Testis (tissue), 5 donors: ENCODE measurements at regions of chr4 and their contacts with region 1.

Region 1: GRCh38 chr4:88456757-88457306 is at the start of gene HERC5:
- DNase-seq: peak; percentile 95
- H3K4me3 ChIP-seq: peak within 1 kb of the TSS; percentile 80 to 97
- H3K27ac ChIP-seq: peak within 1 kb of the TSS; percentile 87 to 89
- H3K4me1 ChIP-seq: no peaks in the 10 kb centered on the region
- H3K27me3 ChIP-seq: no peaks in the 10 kb centered on the region
- CTCF ChIP-seq: peak; percentile 48 to 71 (median 69)
- POLR2A ChIP-seq: peak; percentile 22
- total RNA-seq, gene HERC5: 111 to 127 TPM

Region 2: DNA sequence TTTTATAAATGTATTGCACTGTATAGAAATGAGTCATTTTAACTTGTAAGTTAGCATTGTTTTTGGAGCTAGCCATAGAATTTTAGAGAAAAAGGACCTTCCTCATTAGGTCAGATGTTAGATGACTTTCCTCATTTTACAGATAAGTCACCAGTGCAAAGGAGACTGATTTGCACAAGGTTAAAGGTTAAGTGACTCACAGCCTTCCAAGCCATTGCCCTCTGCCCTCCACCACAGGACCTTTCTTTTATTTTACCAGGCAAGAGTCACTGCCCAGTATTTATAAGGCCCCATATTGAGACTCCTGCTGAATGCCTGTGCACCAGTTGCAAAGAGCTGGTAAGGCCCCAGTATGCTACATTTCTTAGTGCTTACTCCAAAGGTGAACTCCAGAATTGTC is 294.2 kb before region 1 on chr4:
- intact Hi-C with region 1: no loop called
- DNase-seq: no peak
- H3K4me3 ChIP-seq: no peak overlapping the region
- H3K27ac ChIP-seq: no peak overlapping the region
- H3K4me1 ChIP-seq: no peaks in the 10 kb centered on the region
- H3K27me3 ChIP-seq: no peaks in the 10 kb centered on the region
- CTCF ChIP-seq: no peak
- POLR2A ChIP-seq: no peak

Region 3: GRCh38 chr4:88284439-88285234 is 172.2 kb before region 1 on chr4 and contains the start of gene PPM1K:
- intact Hi-C with region 1: loop called (anchors 10 kb)
- DNase-seq: peak; percentile 100
- H3K4me3 ChIP-seq: peak within 1 kb of the TSS; percentile 74 to 88
- H3K27ac ChIP-seq: peak within 1 kb of the TSS; percentile 97 to 98
- H3K4me1 ChIP-seq: peaks cover 11% of the 10 kb centered on the region
- H3K27me3 ChIP-seq: no peaks in the 10 kb centered on the region
- CTCF ChIP-seq: peak in 1 of 3 experiments; percentile 18
- POLR2A ChIP-seq: peak; percentile 44
- total RNA-seq, gene PPM1K: 76.5 to 104 TPM

Region 4: DNA sequence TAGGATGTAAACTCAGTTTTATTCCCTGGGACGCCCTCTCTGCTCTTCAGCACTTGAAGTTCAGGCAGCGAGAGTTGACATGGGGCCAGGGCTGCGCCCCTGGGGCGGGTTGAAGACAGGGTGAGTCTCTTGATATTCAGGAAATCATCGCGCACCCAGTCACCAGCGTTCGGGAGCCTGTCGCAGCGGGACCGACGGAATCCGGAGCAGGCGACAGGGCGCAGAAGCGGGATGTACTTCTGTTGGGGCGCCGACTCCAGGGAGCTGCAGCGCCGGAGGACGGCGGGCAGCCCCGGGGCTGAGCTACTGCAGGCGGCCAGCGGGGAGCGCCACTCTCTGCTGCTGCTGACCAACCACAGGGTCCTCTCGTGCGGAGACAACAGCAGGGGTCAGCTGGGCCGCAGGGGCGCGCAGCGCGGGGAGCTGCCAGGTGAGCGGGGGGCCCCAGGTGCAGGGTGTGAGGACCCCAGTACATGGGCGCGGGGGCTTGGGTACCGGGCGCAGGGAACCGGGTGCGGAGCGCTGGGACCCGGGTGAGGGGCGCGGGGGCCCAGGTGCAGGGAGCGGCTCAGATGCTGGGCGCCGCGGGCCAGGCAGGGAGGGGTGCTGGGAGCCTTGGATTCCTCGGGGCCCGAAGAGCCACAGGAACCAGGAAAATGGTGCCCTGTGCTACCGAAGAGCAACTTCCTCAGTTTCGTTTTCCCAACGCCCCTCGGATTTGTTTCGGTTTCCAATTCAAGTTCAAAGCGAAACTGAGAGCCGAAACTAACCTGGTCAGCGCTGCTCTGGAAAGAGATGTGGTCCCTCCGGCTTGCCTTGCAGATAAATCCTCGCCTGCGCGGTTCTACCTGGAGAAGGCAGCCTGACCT is 77.9 kb before region 1 on chr4 and contains the start of gene HERC6:
- intact Hi-C with region 1: loop called (anchors 10 kb)
- DNase-seq: peak; percentile 82
- H3K4me3 ChIP-seq: peak within 1 kb of the TSS; percentile 94 to 95
- H3K27ac ChIP-seq: peak within 1 kb of the TSS; percentile 96 to 97
- H3K4me1 ChIP-seq: no peaks in the 10 kb centered on the region
- H3K27me3 ChIP-seq: no peaks in the 10 kb centered on the region
- CTCF ChIP-seq: peak; percentile 58 to 78 (median 68)
- POLR2A ChIP-seq: no peak
- total RNA-seq, gene HERC6: 16.6 to 18.8 TPM

Region 5: DNA sequence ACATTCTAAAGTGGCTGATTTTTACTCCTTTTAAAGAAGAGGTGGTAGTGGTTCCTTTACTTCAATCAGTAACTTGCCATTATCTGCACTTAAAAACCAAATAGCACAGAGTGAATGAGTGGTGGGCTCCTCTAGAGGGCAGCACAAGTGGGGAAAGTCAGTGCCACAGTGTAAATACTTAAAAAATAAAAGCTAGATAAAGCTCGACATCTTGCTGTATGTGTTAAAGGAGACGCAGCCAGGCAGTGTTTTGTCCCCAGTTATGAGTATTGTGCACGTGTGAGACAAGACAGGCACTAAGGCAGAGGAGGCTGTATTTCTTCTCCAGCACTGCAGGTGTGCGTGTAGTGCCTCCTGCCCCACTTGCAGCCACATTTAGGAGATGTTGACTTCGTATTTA is 216.2 kb after region 1 on chr4:
- intact Hi-C with region 1: no loop called
- DNase-seq: peak; percentile 44
- H3K4me3 ChIP-seq: no peak overlapping the region
- H3K27ac ChIP-seq: no peak overlapping the region
- H3K4me1 ChIP-seq: no peaks in the 10 kb centered on the region
- H3K27me3 ChIP-seq: no peaks in the 10 kb centered on the region
- CTCF ChIP-seq: peak; percentile 13 to 40 (median 23)
- POLR2A ChIP-seq: no peak